ENCODE measurements at regions of chr3 and their contacts with region 1.

Region 1: GRCh38 chr3:119690043-119690656 is 12.7 kb upstream of the CFAP91 start:
- DNase-seq: no peak
- ATAC-seq: no peak
- H3K4me3 Mint-ChIP-seq: no peak overlapping the region
- H3K27ac Mint-ChIP-seq: no peak overlapping the region
- H3K4me1 Mint-ChIP-seq: no peaks in the 10 kb centered on the region
- H3K27me3 Mint-ChIP-seq: peaks cover 4% of the 10 kb centered on the region
- CTCF ChIP-seq: peak; percentile 67

Region 2: GRCh38 chr3:119700269-119700919 is 10.2 kb after region 1 on chr3:
- CTCF ChIA-PET with region 1: interaction called, 22 read pairs
- POLR2A ChIA-PET with region 1: no interaction called
- intact Hi-C with region 1: no loop called
- DNase-seq: peak; percentile 54
- ATAC-seq: peak; percentile 62
- H3K4me3 Mint-ChIP-seq: no peak overlapping the region
- H3K27ac Mint-ChIP-seq: peak overlapping the region; percentile 95
- H3K4me1 Mint-ChIP-seq: peaks cover 38% of the 10 kb centered on the region
- H3K27me3 Mint-ChIP-seq: peaks cover 4% of the 10 kb centered on the region
- CTCF ChIP-seq: no peak